CD8-positive, alpha-beta T cell (primary cell): ENCODE measurements at regions of chr5 and their contacts with region 1.

Region 1: DNA sequence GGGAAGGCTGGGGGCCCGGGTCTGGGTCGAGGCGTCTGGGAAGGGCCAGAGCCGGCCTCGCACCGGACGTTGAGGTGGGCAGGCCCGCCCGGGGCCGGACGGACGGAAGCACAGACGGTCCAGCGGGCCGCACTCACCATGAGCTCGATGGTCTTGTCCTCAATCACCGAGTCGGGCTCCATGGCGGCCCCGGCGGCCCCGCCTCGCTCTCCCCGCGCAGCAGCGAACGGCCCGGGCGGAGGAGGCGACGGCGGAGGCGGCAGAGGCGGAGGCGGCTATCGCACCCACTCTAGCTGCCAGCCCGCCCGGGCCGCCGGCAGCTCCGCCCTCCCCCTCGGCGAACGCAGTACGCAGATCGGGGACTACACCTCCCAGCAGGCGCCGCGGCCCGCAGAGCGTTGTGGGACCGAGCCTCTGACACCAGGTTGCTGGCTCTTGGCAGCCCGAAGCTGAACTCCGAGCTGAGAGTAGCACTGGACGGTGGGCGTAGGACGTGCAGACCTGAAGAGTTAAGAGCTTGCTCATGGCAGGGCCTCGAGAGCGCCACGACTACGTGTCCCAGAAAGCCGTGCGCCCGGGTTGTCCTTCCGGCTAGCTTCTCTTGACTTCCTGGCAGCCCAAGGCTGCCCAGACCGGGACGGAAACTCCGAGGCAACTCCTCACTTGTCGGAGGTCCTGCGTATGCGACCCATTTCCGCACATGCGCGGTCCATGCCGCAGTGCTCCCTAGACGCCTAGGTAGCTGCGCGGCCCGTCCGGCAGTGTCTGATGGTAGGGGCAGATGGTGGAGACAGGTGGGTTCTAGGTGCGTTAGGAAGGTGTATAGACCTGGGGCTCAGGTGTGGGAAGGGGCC is at the start of gene FBXW11:
- DNase-seq: peak; percentile 87 to 98 (median 94)
- ATAC-seq: peak; percentile 87
- H3K4me3 ChIP-seq: peak within 1 kb of the TSS; percentile 78 to 96
- H3K4me3 Mint-ChIP-seq: peak within 1 kb of the TSS; percentile 95
- H3K27ac ChIP-seq: peak within 1 kb of the TSS; percentile 96 to 99
- H3K27ac Mint-ChIP-seq: peak within 1 kb of the TSS; percentile 98
- H3K4me1 ChIP-seq: peaks cover 35% of the 10 kb centered on the region
- H3K4me1 Mint-ChIP-seq: peaks cover 48% of the 10 kb centered on the region
- H3K27me3 ChIP-seq: no peaks in the 10 kb centered on the region
- H3K27me3 Mint-ChIP-seq: no peaks in the 10 kb centered on the region
- CTCF ChIP-seq: no peak
- total RNA-seq, gene FBXW11: 28.8 to 32.6 TPM

Region 2: DNA sequence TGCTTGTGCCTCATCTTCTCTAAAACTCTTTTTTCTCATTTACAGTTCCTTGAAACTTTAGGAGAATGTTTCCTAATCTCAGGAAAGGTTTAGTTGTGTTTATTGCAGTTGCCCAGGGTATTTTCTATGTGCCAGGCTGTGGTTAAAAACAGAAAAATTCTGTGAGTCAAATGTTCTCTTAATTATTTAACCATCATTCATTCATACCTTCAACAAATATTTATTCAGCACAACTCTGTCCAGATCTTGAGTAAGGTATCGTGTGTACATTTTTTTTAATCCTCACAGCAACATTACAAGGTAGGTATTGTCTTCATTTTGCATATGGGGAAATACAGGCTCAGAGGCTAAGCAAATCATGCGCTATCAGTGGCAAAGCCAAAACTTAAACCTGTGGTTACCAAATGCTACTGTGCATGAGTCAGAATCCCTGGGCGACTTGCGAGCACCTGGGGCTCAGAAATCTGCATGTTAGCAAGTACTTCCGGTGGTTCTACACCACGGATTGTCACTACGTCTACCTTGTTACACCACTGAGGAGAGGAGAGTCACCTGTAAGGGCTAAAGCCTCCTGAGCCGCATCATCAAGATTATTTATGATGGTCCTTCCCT is 1752.6 kb before region 1 on chr5:
- CTCF ChIA-PET with region 1: no interaction called
- POLR2A ChIA-PET with region 1: no interaction called
- intact Hi-C with region 1: no loop called
- DNase-seq: peak; percentile 44 to 92 (median 73)
- ATAC-seq: peak; percentile 95
- H3K4me3 ChIP-seq: no peak overlapping the region
- H3K4me3 Mint-ChIP-seq: peak overlapping the region; percentile 16
- H3K27ac ChIP-seq: peak overlapping the region; percentile 38 to 61
- H3K27ac Mint-ChIP-seq: peak overlapping the region; percentile 95
- H3K4me1 ChIP-seq: peaks cover 39% of the 10 kb centered on the region
- H3K4me1 Mint-ChIP-seq: peaks cover 77% of the 10 kb centered on the region
- H3K27me3 ChIP-seq: no peaks in the 10 kb centered on the region
- H3K27me3 Mint-ChIP-seq: no peaks in the 10 kb centered on the region
- CTCF ChIP-seq: no peak

Region 3: GRCh38 chr5:171505473-171506043 is 501.0 kb before region 1 on chr5:
- CTCF ChIA-PET with region 1: no interaction called
- POLR2A ChIA-PET with region 1: no interaction called
- intact Hi-C with region 1: no loop called
- DNase-seq: no peak
- ATAC-seq: no peak
- H3K4me3 ChIP-seq: no peak overlapping the region
- H3K4me3 Mint-ChIP-seq: no peak overlapping the region
- H3K27ac ChIP-seq: no peak overlapping the region
- H3K27ac Mint-ChIP-seq: no peak overlapping the region
- H3K4me1 ChIP-seq: no peaks in the 10 kb centered on the region
- H3K4me1 Mint-ChIP-seq: no peaks in the 10 kb centered on the region
- H3K27me3 ChIP-seq: no peaks in the 10 kb centered on the region
- H3K27me3 Mint-ChIP-seq: peaks cover 4% of the 10 kb centered on the region
- CTCF ChIP-seq: no peak

Region 4: DNA sequence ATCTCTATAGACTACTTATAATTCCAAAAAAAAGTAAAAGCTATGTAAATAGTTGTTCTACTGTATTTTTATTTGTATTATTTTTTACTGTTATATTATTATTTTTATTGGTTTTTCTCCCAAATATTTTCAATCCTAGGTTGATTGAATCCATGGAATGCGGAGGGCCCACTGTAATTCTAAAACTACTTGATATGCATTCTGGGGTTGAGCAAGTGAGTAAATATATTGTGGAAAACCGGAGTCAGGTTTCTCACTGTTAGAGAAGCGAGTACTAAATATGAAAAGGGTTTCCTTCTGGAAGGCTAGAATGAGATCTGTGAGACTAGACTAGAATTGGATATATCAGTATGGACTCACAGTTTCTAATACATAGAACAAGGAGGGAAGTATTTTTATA is 66.6 kb before region 1 on chr5:
- CTCF ChIA-PET with region 1: no interaction called
- POLR2A ChIA-PET with region 1: no interaction called
- intact Hi-C with region 1: no loop called
- DNase-seq: no peak
- ATAC-seq: no peak
- H3K4me3 ChIP-seq: no peak overlapping the region
- H3K4me3 Mint-ChIP-seq: no peak overlapping the region
- H3K27ac ChIP-seq: no peak overlapping the region
- H3K27ac Mint-ChIP-seq: peak overlapping the region; percentile 37
- H3K4me1 ChIP-seq: no peaks in the 10 kb centered on the region
- H3K4me1 Mint-ChIP-seq: peaks cover 44% of the 10 kb centered on the region
- H3K27me3 ChIP-seq: no peaks in the 10 kb centered on the region
- H3K27me3 Mint-ChIP-seq: no peaks in the 10 kb centered on the region
- CTCF ChIP-seq: no peak

Region 5: GRCh38 chr5:171957591-171958251 is 48.8 kb before region 1 on chr5:
- CTCF ChIA-PET with region 1: interaction called, 7 read pairs
- POLR2A ChIA-PET with region 1: interaction called, 11 read pairs
- intact Hi-C with region 1: loop called in 1 of 2 experiments (anchors 5 kb)
- DNase-seq: peak in 7 of 9 experiments; percentile 16 to 73 (median 52)
- ATAC-seq: peak; percentile 75
- H3K4me3 ChIP-seq: no peak overlapping the region
- H3K4me3 Mint-ChIP-seq: peak overlapping the region; percentile 37
- H3K27ac ChIP-seq: peak overlapping the region; percentile 34 to 67
- H3K27ac Mint-ChIP-seq: peak overlapping the region; percentile 89
- H3K4me1 ChIP-seq: peaks cover 41% of the 10 kb centered on the region
- H3K4me1 Mint-ChIP-seq: peaks cover 68% of the 10 kb centered on the region
- H3K27me3 ChIP-seq: no peaks in the 10 kb centered on the region
- H3K27me3 Mint-ChIP-seq: no peaks in the 10 kb centered on the region
- CTCF ChIP-seq: no peak

Region 6: DNA sequence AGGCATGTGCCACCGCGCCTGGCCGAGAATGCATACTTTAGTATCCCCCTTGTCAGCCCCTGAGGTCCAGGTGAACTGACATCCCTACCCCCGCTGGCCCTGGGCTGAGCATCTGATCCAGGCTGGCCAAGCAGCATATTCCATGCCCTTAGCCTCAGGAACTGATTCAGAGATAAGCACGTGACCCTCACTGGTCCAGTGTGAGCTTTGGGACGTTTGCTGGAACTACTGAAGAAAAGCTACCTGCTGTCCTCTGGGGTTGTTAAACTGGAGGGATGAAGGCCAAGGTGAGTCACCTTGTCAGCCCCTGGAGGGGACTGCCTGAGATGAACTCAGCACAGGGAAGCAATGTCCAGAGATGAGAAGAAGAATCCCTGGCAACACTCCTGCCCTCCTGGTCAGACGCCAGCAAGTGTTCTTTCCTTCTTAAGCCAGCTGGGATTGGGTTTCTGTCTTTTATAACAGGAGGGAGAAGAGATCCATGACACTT is 59.0 kb after region 1 on chr5:
- CTCF ChIA-PET with region 1: interaction called, 3 read pairs
- POLR2A ChIA-PET with region 1: interaction called, 13 read pairs
- intact Hi-C with region 1: loop called in 1 of 2 experiments (anchors 2 kb)
- DNase-seq: no peak
- ATAC-seq: no peak
- H3K4me3 ChIP-seq: peak overlapping the region in 1 of 2 experiments; percentile 6
- H3K4me3 Mint-ChIP-seq: peak overlapping the region; percentile 15
- H3K27ac ChIP-seq: peak overlapping the region; percentile 34 to 67
- H3K27ac Mint-ChIP-seq: peak overlapping the region; percentile 98
- H3K4me1 ChIP-seq: peaks cover 57% of the 10 kb centered on the region
- H3K4me1 Mint-ChIP-seq: peaks cover 72% of the 10 kb centered on the region
- H3K27me3 ChIP-seq: no peaks in the 10 kb centered on the region
- H3K27me3 Mint-ChIP-seq: no peaks in the 10 kb centered on the region
- CTCF ChIP-seq: no peak

Region 7: DNA sequence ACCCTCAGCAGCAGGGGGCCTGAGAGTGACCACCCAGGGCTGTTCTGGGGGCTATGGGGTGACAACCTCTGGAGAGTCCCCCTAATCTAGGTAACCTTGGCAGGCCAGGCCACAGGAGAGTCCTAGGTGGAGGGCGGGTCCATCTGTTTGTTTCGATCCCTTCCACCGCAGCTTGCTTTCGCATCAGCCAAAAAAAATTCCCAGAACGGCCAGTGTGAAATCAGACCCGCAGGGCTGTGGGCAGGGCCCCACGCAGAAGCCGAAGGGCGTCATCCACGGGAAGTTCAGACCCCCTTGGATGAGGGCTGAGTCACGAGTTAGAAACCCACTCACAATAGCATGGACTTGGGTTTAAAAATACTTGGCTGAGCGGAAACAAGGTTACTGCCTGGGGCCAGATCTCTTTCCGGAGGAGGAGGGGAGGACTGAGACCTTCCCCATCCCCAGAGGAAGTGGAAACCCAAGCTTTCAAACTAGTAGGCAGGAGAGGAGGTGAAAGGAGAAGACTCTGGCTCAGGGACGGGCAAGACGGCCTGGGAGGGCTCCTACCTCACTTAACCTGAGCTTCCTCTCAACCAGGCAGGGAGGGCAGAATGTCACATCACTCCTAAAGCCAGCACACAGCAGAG is 172.9 kb after region 1 on chr5:
- CTCF ChIA-PET with region 1: no interaction called
- POLR2A ChIA-PET with region 1: interaction called, 23 read pairs
- intact Hi-C with region 1: loop called in 1 of 2 experiments (anchors 1 kb)
- DNase-seq: peak in 8 of 9 experiments; percentile 36 to 86 (median 58)
- ATAC-seq: peak; percentile 9
- H3K4me3 ChIP-seq: peak overlapping the region; percentile 49 to 51
- H3K4me3 Mint-ChIP-seq: peak overlapping the region; percentile 80
- H3K27ac ChIP-seq: peak overlapping the region; percentile 92 to 97
- H3K27ac Mint-ChIP-seq: peak overlapping the region; percentile 97
- H3K4me1 ChIP-seq: peaks cover 90% of the 10 kb centered on the region
- H3K4me1 Mint-ChIP-seq: peaks cover 89% of the 10 kb centered on the region
- H3K27me3 ChIP-seq: no peaks in the 10 kb centered on the region
- H3K27me3 Mint-ChIP-seq: no peaks in the 10 kb centered on the region
- CTCF ChIP-seq: no peak

Region 8: DNA sequence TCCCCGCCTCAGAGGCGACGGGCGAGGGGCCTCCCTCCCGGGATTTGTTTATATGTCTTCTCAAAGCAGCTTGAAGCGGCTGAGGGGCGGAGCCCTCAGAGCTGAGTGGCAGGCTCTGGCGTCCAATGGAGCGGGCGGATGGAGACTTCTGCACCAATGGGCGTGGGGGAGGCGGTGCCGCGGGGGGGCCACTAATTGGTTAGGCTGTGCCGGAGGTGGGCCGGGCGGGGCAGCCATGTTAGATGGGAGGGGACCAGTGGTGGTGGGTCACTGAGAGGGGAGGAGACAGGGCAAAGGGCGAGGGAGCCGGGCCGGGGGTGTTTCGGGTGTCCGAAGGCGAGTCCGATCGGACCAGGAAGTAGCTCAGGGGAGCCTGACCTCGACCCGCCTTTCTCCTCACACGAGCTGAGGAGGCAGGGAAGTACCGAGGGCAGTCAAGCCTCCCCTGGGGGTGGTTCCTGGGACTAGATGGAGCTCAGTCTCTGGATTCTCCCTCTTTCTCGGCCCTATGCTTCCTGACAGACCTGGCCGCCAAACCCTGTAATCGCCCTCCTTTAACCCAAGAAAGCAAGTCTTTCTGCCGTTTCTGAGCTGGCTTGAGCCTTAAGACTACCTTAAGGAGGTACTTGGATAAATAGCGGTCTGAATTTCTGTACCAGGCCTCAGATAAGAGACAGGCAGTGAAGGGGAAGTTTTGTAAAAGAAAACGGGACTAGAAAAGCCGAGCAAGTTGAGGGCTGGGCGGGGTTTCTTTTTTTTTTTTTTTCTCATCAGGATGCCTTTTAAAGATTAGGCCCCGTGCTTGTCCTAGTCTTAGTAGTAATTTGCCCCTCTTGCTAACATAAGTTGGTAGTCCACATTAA is 1050.7 kb after region 1 on chr5:
- CTCF ChIA-PET with region 1: no interaction called
- POLR2A ChIA-PET with region 1: interaction called, 3 read pairs
- intact Hi-C with region 1: loop called in 1 of 2 experiments (anchors 5 kb)
- DNase-seq: peak; percentile 98 to 99 (median 98)
- ATAC-seq: peak; percentile 81
- H3K4me3 ChIP-seq: peak overlapping the region; percentile 92 to 99
- H3K4me3 Mint-ChIP-seq: peak overlapping the region; percentile 94
- H3K27ac ChIP-seq: peak overlapping the region; percentile 80 to 81
- H3K27ac Mint-ChIP-seq: peak overlapping the region; percentile 94
- H3K4me1 ChIP-seq: peaks cover 36% of the 10 kb centered on the region
- H3K4me1 Mint-ChIP-seq: peaks cover 44% of the 10 kb centered on the region
- H3K27me3 ChIP-seq: no peaks in the 10 kb centered on the region
- H3K27me3 Mint-ChIP-seq: no peaks in the 10 kb centered on the region
- CTCF ChIP-seq: no peak